Activated naive CD4-positive, alpha-beta T cell treated with anti-CD3 and anti-CD28 coated beads for 36 hours (primary cell): ENCODE measurements at regions of chr3 and their contacts with region 1.

Region 1: DNA sequence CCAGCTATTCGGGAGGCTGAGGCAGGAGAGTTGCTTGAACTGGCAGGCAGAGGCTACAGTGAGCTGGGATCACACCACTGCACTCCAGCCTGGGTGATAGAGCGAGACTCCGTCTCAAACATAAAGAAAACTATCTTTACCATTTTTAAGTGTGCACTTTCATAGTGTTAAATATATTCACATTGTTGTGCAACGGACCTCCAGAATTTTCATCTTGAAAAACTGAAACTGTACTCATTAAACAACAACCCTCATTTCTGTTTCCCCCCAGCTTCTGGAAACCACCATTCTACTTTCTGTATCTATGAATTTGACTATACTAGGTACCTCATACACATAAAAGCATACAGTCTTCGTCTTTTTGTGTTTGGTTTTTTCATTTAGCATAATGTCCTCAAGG is 375.1 kb downstream of the SHQ1 start:
- DNase-seq: no peak
- H3K4me3 Mint-ChIP-seq: no peak overlapping the region
- H3K27ac Mint-ChIP-seq: peak overlapping the region; percentile 17
- H3K4me1 Mint-ChIP-seq: peaks cover 36% of the 10 kb centered on the region
- H3K27me3 Mint-ChIP-seq: no peaks in the 10 kb centered on the region

Region 2: GRCh38 chr3:72458358-72458757 is 14.8 kb before region 1 on chr3:
- CTCF ChIA-PET with region 1: interaction called, 4 read pairs
- intact Hi-C with region 1: loop called (anchors 1 kb)
- DNase-seq: no peak
- H3K4me3 Mint-ChIP-seq: no peak overlapping the region
- H3K27ac Mint-ChIP-seq: no peak overlapping the region
- H3K4me1 Mint-ChIP-seq: peaks cover 17% of the 10 kb centered on the region
- H3K27me3 Mint-ChIP-seq: peaks cover 17% of the 10 kb centered on the region